Dorsolateral prefrontal cortex (tissue), 120 donors: ENCODE measurements at regions of chr2 and their contacts with region 1.

Region 1: GRCh38 chr2:105576440-105577252 is 168.1 kb upstream of the NCK2 start:
- DNase-seq: no peak
- H3K4me3 ChIP-seq: no peak overlapping the region
- H3K27ac ChIP-seq: peak overlapping the region in 52 of 59 donors; percentile 3 to 92 (median 58)
- H3K27me3 ChIP-seq: no peaks in the 10 kb centered on the region
- CTCF ChIP-seq: peak; percentile 37 to 77 (median 63)

Region 2: GRCh38 chr2:105526000-105526925 is 50.4 kb before region 1 on chr2:
- intact Hi-C with region 1: no loop called
- DNase-seq: no peak
- H3K4me3 ChIP-seq: no peak overlapping the region
- H3K27ac ChIP-seq: no peak overlapping the region
- H3K27me3 ChIP-seq: no peaks in the 10 kb centered on the region
- CTCF ChIP-seq: no peak

Region 3: DNA sequence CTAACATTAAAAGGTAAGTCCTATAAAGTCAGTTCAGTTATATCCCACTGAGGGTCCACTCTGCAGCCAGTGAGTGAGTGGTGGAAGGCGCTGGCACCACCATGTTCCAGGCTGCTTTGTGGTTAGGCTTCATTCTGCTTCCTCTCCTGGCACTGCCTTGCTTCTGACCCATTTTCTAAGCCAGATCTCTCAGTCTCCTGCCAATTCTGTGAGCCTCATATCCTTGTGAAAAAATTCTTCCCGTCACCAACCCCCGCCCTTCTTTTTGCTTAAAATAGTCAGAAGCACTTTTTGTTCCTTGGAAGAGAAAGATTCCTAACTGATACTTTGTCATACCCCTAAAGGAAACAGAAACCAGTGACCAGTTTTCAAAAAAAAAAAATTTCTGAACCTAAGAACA is 28.3 kb after region 1 on chr2:
- intact Hi-C with region 1: no loop called
- DNase-seq: peak in 6 of 10 donors; percentile 25 to 80 (median 58)
- H3K4me3 ChIP-seq: peak overlapping the region in 3 of 59 donors; percentile 1 to 25 (median 24)
- H3K27ac ChIP-seq: peak overlapping the region in 52 of 59 donors; percentile 28 to 91 (median 75)
- H3K27me3 ChIP-seq: no peaks in the 10 kb centered on the region
- CTCF ChIP-seq: no peak

Region 4: DNA sequence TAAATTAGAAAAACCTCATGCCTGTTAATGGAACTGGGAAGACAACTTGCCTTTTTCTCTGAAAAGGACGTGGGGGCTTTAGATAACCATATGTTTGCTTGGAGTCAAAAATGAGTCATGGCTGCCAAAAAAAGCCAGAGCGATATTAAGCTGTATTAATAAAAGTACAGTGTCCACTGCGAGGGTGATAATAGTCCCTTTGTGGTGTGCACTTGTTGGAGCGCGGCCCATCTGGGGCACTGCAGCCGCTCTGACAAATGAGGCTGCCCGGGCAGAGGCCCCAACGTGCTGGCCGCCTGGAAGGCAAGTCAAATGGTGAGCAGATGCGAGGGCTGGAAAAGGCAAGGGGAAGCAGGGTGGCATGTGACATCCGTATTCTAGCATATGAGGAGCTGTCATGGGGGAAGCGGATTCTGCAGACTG is 64.8 kb after region 1 on chr2:
- intact Hi-C with region 1: no loop called
- DNase-seq: peak; percentile 74 to 91 (median 86)
- H3K4me3 ChIP-seq: peak overlapping the region in 15 of 59 donors; percentile 2 to 36 (median 16)
- H3K27ac ChIP-seq: peak overlapping the region in 14 of 59 donors; percentile 4 to 60 (median 26)
- H3K27me3 ChIP-seq: no peaks in the 10 kb centered on the region
- CTCF ChIP-seq: peak in 16 of 56 donors; percentile 9 to 50 (median 22)

Region 5: DNA sequence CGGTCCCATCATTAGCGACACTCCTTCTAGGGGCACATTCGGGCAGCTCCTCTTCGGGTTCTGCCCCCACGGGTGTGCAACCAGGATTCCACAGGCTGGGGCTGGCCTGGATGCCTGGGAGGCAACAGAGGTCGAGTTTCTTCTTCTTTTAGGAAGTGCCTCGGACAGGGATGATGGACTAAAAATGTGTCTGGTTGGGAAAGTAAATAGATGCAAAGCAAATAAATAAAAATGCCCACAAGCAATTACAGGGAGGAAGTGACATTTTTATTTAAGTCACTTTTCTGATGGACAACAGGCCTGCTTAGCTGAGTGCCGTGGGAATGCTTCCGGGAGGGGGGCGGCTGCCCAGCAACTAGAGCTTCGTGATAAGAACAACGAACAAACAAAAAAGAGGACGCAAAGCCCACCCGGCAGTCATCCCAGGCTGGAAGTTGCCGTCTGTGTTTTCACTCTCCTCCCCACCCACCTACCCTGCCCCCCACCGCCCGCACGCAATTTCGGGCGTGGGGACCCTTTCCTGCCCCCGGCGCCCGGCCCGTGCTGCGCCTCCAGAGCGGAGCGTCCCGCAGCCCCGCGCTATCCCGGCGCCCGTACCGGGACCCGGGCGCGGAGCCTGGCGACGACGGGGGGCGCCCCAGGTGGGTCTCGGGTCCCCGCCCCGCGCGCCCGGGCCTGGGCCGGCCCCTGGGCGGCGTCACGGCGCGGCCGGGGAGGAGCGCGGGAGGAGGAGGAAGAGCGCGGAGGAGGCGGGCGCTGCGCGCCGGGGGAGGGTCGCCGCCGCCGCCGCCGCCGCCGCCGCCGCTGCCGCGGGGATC is 167.7 kb after region 1 on chr2:
- intact Hi-C with region 1: loop called (anchors 5 to 10 kb)
- DNase-seq: peak in 5 of 10 donors; percentile 26 to 61 (median 49)
- H3K4me3 ChIP-seq: peak overlapping the region; percentile 50 to 96 (median 69)
- H3K27ac ChIP-seq: peak overlapping the region in 58 of 59 donors; percentile 3 to 90 (median 80)
- H3K27me3 ChIP-seq: no peaks in the 10 kb centered on the region
- CTCF ChIP-seq: peak in 2 of 56 donors; percentile 14 to 21

Region 6: DNA sequence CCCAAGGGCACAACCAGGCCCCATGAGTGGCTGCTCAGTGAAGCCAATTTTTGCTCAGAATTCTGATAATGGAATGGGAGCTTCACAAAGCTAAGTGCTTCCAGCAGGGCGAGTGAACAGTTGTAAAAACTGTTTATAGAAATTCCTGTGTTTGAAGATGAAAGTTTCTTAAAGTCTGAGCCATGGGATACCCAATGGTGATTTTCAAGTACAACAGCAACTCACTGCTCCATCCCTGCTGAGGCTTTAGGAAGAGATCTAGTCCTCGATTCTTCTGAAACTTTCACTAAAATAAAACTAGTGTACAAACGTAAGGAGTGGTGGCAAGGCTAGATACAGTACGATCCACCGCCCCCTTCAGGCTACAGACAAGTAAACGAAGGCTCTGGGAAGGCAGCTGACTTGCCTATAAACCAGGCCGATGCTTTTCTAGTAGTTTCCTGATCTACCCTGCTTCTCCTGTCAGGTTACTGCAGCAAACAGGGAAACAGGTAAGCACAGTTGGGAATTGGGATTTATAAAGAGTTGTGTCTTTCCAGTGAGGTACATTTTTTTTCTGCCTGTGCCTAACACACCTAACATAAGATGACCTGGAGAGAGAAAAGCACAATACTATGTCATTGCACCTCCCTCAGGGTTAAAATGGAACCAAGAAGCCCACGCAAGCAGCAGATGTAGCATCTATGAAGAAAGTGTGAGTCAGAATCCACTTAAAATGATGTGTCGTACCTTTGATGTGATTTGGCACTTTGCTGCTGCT is 508.7 kb after region 1 on chr2:
- intact Hi-C with region 1: loop called (anchors 10 kb)
- DNase-seq: peak in 1 of 10 donors; percentile 56
- H3K4me3 ChIP-seq: no peak overlapping the region
- H3K27ac ChIP-seq: peak overlapping the region in 16 of 59 donors; percentile 4 to 56 (median 23)
- H3K27me3 ChIP-seq: no peaks in the 10 kb centered on the region
- CTCF ChIP-seq: peak in 33 of 56 donors; percentile 12 to 53 (median 27)

Region 7: GRCh38 chr2:106098081-106098480 is 521.4 kb after region 1 on chr2:
- intact Hi-C with region 1: loop called in 1 of 2 experiments (anchors 10 kb)
- DNase-seq: no peak
- H3K4me3 ChIP-seq: no peak overlapping the region
- H3K27ac ChIP-seq: no peak overlapping the region
- H3K27me3 ChIP-seq: no peaks in the 10 kb centered on the region
- CTCF ChIP-seq: peak in 27 of 56 donors; percentile 8 to 51 (median 25)

Region 8: GRCh38 chr2:106137731-106138521 is 561.3 kb after region 1 on chr2:
- intact Hi-C with region 1: no loop called
- DNase-seq: no peak
- H3K4me3 ChIP-seq: peak overlapping the region in 1 of 59 donors; percentile 9
- H3K27ac ChIP-seq: peak overlapping the region in 27 of 59 donors; percentile 4 to 77 (median 41)
- H3K27me3 ChIP-seq: no peaks in the 10 kb centered on the region
- CTCF ChIP-seq: no peak